HEK293T (cell line): ENCODE measurements at regions of chr19 and their contacts with region 1.

Region 1: DNA sequence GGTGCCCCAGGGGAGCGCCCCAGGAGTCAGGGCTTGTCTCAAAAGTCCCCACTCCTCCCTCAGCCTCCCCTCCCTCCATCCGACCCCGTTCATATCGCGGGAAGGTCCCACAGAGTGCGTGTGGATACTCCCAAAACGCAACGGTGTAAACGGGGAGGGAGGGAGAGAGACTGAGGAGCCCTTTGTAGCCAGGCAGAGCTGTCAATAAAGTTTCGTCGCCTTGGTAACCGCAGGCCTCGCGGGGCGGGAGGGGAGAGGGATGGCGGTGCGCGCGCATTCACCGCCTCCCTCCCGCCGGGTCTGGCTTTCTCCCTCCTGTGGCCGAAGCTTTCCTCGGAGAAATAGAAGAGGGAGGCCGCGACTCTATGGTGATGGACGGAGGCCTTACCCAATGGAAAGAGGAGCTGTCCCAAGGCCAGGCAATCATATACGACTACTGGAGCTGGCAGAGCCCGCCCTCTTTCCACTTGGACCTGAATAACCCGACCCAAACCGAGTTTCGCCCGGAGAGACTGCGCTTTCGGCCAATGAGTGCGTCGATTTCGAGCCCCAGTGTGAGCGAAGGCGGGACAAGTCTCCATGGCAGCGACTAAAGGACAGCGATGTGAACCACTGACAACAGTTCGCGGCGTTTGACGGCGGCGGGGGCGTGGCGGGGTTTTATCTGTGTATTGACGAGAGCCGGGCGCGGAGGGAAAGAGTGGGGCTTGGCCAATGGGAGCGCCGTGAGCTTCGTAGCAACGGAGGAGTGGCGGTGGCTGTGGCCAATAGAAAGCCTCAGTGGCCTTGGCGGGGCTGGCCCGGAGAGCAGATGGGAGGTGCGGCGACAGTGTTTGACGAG is at the start of gene KMT5C:
- DNase-seq: peak; percentile 98

Region 2: DNA sequence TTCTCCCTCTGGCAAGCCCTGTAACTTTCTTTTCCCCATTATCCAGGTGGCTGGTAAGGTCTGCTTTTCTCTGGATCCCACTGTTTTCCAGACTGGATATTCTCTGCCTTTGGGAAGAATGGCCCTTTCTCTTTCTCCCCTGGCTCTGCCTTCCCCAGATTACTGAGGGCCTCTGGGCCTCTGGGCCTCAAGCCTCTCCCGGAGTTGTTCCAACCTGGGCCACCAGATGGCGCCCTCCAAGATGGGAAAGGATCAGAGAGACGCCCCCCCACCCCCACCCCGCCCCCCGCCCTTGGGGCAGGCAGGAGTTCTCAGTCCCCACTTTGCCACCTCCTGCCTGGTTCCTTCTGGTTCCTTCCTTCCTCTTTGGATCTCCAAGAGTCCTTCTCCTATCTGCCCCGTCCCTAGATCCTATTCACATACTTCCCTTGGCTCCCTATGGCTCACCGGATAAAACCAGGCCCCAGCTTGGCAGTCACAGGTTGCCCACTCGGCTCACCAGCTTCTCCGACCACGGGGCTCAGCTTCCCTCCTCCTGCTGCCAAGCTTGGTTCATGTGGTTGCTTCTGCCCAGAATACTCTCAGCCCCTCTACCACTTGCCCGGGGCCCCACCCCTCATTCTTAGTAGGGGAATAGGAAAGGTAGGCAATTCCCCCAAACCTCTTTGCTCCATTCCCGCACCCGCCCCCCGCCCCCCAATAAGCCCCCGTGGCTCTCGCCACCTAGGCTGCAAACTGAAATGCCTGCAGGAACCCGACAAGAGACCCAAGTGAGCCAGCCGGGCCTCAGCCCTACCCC is 250.5 kb before region 1 on chr19:
- CTCF ChIA-PET with region 1: no interaction called
- POLR2A ChIA-PET with region 1: no interaction called
- DNase-seq: peak; percentile 82

Region 3: DNA sequence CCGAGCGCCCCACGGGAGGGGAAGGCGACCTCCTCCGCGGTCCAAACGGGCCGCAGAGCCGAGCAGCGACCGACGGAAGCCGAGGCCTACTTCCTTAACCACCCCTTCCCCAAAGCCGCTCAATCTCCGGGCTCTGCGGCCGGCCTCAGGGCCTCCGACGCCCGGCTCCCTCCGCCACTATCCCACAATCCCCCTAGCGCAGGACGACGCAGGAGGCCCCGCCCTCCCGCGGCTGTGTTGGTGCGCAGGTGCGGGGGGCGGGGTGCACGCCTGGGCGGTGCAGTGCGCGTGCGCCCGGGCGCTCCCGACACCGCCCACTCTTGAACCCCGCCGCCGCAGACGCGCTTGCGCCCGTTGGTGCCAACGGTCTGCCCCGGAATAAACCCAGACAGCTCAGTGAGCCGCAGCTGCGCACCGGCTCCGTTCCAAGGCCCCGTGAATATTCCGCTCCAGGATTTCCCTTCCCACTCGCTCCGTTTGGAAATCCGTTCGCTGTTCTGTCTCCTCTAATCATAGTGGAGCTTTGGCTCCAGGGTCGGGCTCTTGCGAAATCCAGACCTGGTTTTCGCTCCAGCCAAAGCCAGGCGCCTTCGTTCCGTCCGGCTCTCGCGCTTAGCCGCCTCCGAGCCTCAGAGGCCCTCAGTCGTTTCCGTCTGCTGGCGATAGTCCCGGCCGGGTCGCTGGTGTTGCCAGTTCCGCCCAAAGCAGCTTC is 80.3 kb before region 1 on chr19 and contains the start of gene PPP6R1:
- CTCF ChIA-PET with region 1: no interaction called
- POLR2A ChIA-PET with region 1: interaction called, 10 read pairs
- DNase-seq: peak; percentile 99

Region 4: GRCh38 chr19:55325172-55325571 is 14.1 kb before region 1 on chr19 and contains the start of gene TMEM150B:
- CTCF ChIA-PET with region 1: no interaction called
- POLR2A ChIA-PET with region 1: interaction called, 13 read pairs
- DNase-seq: no peak

Region 5: GRCh38 chr19:55383789-55384577 is 44.7 kb after region 1 on chr19 and contains the start of gene TMEM238:
- CTCF ChIA-PET with region 1: no interaction called
- POLR2A ChIA-PET with region 1: interaction called, 14 read pairs
- DNase-seq: no peak

Region 6: DNA sequence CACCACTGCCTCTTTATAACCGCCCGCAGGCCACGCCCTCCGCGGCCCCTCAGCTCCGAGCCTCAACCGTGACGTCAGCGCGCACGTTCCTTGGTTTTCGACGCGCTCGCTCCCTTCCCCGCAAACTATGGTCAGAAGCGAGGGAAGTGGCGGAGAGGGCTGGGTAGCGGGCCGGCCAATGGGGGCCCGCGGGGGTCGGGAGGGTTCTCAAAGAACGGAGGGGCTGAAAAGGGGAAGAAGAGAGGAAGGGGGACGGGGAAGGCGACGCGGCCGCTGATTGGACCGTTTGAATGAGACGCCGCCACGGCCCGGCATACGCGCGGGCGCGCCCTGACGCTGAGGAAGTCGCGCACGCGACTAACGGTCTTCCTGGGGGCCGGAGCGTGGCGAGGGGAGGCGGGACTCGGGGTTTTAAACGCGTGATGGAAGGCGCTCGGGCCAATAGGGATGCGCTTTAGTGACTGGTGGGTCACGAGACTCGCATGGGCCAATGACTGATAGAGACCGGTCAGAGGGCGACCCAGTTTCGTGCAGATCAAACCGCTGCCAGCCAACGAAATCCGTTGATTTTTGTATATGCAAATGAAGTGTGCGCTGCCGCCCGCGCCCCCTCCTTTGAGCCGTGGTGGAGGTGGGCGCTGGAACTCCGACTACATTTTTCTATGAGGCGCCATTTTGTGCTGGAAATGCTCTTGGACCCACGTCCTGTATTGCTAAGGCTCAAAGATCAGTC is 68.7 kb after region 1 on chr19:
- CTCF ChIA-PET with region 1: no interaction called
- POLR2A ChIA-PET with region 1: interaction called, 26 read pairs
- DNase-seq: peak; percentile 97